Ascending aorta (tissue), 2 donors: ENCODE measurements at regions of chr2 and their contacts with region 1.

Region 1: GRCh38 chr2:65576861-65577601 is 144.6 kb upstream of the SPRED2 start:
- DNase-seq: no peak
- H3K4me3 ChIP-seq: peak overlapping the region in 1 of 2 donors; percentile 43
- H3K27ac ChIP-seq: peak overlapping the region; percentile 78 to 82
- H3K4me1 ChIP-seq: peaks cover 2 to 20% of the 10 kb centered on the region in 2 donors
- H3K27me3 ChIP-seq: no peaks in the 10 kb centered on the region
- CTCF ChIP-seq: no peak

Region 2: GRCh38 chr2:64914735-64915509 is 662.1 kb before region 1 on chr2:
- intact Hi-C with region 1: loop called (anchors 2 kb)
- DNase-seq: no peak
- H3K4me3 ChIP-seq: no peak overlapping the region
- H3K27ac ChIP-seq: no peak overlapping the region
- H3K4me1 ChIP-seq: no peaks in the 10 kb centered on the region
- H3K27me3 ChIP-seq: no peaks in the 10 kb centered on the region
- CTCF ChIP-seq: no peak

Region 3: GRCh38 chr2:65040400-65041261 is 536.4 kb before region 1 on chr2:
- intact Hi-C with region 1: loop called (anchors 5 kb)
- DNase-seq: peak; percentile 56 to 93
- H3K4me3 ChIP-seq: peak overlapping the region; percentile 32 to 33
- H3K27ac ChIP-seq: no peak overlapping the region
- H3K4me1 ChIP-seq: no peaks in the 10 kb centered on the region
- H3K27me3 ChIP-seq: no peaks in the 10 kb centered on the region
- CTCF ChIP-seq: peak; percentile 91 to 97 (median 97)

Region 4: DNA sequence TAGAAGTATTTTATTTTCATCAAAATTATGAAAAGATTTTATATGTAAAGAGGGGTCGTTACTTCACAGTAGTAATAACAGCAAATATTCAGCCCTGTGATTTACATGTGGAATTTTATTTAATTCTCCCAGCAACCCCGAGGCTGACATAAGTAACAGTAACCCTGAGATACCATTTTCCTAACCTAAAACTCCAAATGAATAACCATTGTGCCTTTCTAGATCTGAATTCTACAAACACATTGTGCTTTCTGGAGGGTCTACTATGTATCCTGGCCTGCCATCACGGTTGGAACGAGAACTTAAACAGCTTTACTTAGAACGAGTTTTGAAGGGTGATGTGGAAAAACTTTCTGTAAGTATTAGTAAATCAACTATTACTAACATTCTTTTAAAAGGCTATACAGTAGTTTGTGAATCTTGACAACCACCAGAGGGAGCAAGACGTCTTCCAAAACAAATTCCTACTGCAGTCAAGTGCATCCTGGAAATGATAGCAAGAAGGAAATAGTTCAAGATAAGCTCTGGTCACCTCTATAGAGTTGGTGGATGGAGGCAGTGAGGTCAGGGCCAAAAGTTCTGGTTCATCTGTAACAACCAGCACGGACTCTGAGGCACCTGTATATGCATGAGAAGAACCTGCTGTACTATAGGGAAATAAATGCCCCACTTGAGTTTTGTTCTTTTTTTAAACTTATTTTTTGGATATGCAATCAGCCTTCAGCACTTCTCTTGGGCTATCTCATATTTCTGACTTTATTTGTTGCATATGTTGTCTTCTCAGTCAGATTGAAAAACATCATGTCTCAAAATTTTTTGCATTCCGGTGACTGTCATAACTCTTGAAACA is 312.0 kb before region 1 on chr2:
- intact Hi-C with region 1: loop called (anchors 5 kb)
- DNase-seq: no peak
- H3K4me3 ChIP-seq: no peak overlapping the region
- H3K27ac ChIP-seq: no peak overlapping the region
- H3K4me1 ChIP-seq: no peaks in the 10 kb centered on the region
- H3K27me3 ChIP-seq: no peaks in the 10 kb centered on the region
- CTCF ChIP-seq: peak; percentile 54 to 69 (median 57)

Region 5: DNA sequence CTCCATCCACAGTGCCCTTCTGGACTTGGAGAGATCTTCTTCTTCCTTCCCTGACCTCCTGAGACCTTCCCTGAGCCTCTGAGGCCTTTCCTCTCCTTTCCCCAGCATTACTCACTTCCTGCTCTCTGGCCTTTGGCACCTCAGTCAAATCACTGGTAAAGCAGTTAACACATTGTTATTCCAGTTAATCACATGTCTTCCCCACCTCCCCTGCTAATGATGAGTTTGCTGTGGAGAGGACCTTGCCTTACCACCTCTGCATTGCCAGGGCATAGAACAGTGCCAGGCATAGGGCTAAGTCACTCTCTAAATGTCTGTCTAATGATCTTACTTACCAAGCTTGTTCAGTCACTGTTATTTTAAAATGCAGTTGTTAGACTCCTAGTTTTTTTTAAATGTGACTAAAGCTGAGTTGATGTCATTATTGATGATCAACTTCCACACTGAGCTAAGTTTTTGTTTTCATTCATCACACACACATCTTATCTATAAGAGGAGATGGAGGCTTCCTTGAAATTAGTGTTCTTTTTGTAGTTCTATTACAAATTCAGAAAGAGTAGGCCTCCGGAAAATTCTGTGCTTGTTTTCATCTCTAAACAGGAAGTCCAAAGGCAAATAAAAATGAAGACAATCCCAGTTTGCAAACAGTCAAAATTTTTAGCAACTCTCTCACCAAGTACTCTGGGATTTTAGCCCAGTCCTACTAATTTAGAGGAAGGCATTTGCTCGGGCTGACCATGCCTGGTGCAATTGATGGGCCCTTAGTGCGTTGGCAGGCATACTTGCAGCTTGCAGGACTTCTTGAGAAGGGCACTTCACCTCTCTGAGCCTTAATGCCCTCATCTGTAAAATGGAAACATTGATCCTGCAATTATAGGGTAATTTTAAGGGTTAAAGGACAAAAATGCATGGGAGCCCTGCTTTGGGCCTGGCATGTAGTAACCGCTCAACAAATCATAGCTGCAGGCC is 30.9 kb before region 1 on chr2:
- intact Hi-C with region 1: no loop called
- DNase-seq: no peak
- H3K4me3 ChIP-seq: no peak overlapping the region
- H3K27ac ChIP-seq: no peak overlapping the region
- H3K4me1 ChIP-seq: no peaks in the 10 kb centered on the region
- H3K27me3 ChIP-seq: no peaks in the 10 kb centered on the region
- CTCF ChIP-seq: no peak

Region 6: DNA sequence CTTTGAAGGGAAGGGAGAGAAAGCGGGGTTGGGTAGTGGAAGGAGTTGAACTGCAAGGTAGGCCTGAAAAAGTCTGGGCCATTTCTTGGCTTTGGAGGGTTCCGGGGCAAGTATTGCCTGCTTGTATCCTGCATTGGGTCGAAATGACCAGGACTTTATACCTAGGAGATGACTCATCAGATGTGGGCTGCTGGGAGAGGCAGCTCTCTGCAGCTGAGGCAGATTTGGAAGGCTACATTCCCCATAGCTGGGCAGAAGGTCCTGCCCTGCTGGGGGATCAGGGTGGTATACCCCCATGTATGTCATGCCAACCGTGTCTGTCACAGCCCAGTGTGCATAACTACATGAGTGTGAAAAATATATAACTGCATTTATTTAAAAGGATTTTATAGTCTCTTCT is 27.2 kb after region 1 on chr2:
- intact Hi-C with region 1: loop called (anchors 2 kb)
- DNase-seq: no peak
- H3K4me3 ChIP-seq: no peak overlapping the region
- H3K27ac ChIP-seq: peak overlapping the region; percentile 75 to 76
- H3K4me1 ChIP-seq: peaks cover 8 to 44% of the 10 kb centered on the region in 2 donors
- H3K27me3 ChIP-seq: no peaks in the 10 kb centered on the region
- CTCF ChIP-seq: no peak

Region 7: GRCh38 chr2:66110608-66111007 is 533.6 kb after region 1 on chr2:
- intact Hi-C with region 1: no loop called
- DNase-seq: no peak
- H3K4me3 ChIP-seq: no peak overlapping the region
- H3K27ac ChIP-seq: no peak overlapping the region
- H3K4me1 ChIP-seq: no peaks in the 10 kb centered on the region
- H3K27me3 ChIP-seq: no peaks in the 10 kb centered on the region
- CTCF ChIP-seq: no peak

Region 8: GRCh38 chr2:66189553-66189952 is 612.5 kb after region 1 on chr2:
- intact Hi-C with region 1: no loop called
- DNase-seq: no peak
- H3K4me3 ChIP-seq: no peak overlapping the region
- H3K27ac ChIP-seq: no peak overlapping the region
- H3K4me1 ChIP-seq: no peaks in the 10 kb centered on the region
- H3K27me3 ChIP-seq: no peaks in the 10 kb centered on the region
- CTCF ChIP-seq: no peak